ENCODE measurements at regions of chr22 and their contacts with region 1.

Region 1: DNA sequence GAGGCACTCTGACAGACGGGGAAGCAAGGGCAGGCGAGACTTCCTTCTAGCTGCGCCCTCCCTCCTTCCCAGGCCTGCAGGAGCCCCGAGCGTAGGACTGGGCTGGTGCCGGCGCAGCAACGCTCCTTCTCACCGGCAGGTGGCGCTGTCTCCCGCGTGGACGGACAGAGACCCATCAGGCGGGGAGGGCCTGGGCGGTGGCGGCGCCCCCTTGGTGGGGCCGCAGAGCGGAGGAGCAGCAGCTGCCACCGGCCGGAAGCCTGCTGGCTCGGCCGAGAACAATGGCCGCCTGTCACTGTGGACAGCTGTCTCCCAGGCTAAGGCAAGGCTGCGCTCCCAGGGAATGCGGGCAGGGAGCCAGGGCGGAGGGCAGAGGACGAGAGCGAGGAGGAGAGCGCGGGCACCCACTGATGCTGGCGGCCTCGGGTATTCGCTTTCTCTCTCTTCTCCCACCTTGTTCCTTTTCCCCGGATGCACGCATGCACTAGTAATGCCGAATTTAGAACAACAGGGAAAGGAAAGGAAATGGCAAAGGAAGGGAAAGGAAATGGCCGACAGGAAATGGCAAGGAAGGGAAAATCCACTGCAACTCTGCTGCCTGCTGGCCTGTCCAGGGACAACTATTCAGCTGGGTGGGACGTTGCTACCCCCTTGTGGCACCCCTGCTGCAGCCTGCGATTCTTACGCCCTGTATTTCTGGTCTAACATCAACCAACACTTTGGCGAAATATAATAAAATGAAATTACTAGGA is 14.4 kb downstream of the PPM1F start:
- DNase-seq: peak; percentile 90 to 96 (median 96)
- H3K4me3 ChIP-seq: peak overlapping the region in 6 of 7 experiments; percentile 16 to 66 (median 39)
- H3K27ac ChIP-seq: peak overlapping the region in 1 of 2 experiments; percentile 84
- H3K4me1 ChIP-seq: peaks cover 16 to 83% (median 80%) of the 10 kb centered on the region in 4 experiments
- H3K27me3 ChIP-seq: no peaks in the 10 kb centered on the region

Region 2: GRCh38 chr22:21778705-21779363 is 159.4 kb before region 1 on chr22:
- CTCF ChIA-PET with region 1: interaction called, 18 read pairs
- POLR2A ChIA-PET with region 1: no interaction called
- DNase-seq: no peak
- H3K4me3 ChIP-seq: no peak overlapping the region
- H3K27ac ChIP-seq: no peak overlapping the region
- H3K4me1 ChIP-seq: no peaks in the 10 kb centered on the region
- H3K27me3 ChIP-seq: no peaks in the 10 kb centered on the region

Region 3: DNA sequence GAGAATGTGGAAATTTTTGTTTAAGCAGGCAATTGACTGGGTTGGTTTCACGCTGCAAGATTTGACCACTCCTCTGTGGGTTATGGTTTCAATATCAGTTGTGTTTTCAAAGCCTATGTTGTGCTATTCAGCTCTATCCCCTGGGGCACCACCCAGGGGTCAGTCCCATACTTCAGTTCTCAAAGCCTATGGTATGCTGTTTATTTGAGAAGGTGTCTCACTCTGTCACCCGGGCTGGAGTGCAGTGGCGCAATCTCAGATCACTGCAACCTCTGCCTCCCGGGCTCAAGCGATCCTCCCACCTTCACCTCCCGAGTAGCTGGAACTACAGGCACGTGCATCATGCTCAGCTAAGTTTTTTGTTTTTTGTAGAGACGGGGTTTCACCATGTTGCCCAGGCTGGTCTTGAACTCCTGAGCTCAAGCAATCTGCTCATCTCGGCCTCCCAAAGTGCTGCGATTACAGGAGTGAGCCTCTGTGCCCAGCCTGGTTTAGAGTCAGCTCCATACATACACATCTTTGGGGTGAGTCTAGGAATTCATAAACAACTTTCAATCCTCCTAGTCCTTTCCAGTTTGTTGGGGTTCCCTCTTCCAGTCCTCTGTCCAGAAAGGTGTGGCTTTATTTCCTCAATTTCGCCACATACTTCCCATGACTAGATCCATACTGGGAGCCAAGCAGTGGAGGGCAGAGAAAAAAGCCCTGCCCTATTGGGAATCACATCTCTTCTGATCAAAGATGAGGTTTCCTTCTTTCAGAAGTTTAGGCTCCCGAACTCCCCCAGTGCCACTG is 35.8 kb before region 1 on chr22:
- CTCF ChIA-PET with region 1: no interaction called
- POLR2A ChIA-PET with region 1: no interaction called
- DNase-seq: no peak
- H3K4me3 ChIP-seq: no peak overlapping the region
- H3K27ac ChIP-seq: no peak overlapping the region
- H3K4me1 ChIP-seq: no peaks in the 10 kb centered on the region
- H3K27me3 ChIP-seq: no peaks in the 10 kb centered on the region

Region 4: GRCh38 chr22:21917181-21917958 is 20.9 kb before region 1 on chr22:
- CTCF ChIA-PET with region 1: interaction called, 10 read pairs
- POLR2A ChIA-PET with region 1: no interaction called
- DNase-seq: no peak
- H3K4me3 ChIP-seq: no peak overlapping the region
- H3K27ac ChIP-seq: no peak overlapping the region
- H3K4me1 ChIP-seq: no peaks in the 10 kb centered on the region
- H3K27me3 ChIP-seq: no peaks in the 10 kb centered on the region

Region 5: DNA sequence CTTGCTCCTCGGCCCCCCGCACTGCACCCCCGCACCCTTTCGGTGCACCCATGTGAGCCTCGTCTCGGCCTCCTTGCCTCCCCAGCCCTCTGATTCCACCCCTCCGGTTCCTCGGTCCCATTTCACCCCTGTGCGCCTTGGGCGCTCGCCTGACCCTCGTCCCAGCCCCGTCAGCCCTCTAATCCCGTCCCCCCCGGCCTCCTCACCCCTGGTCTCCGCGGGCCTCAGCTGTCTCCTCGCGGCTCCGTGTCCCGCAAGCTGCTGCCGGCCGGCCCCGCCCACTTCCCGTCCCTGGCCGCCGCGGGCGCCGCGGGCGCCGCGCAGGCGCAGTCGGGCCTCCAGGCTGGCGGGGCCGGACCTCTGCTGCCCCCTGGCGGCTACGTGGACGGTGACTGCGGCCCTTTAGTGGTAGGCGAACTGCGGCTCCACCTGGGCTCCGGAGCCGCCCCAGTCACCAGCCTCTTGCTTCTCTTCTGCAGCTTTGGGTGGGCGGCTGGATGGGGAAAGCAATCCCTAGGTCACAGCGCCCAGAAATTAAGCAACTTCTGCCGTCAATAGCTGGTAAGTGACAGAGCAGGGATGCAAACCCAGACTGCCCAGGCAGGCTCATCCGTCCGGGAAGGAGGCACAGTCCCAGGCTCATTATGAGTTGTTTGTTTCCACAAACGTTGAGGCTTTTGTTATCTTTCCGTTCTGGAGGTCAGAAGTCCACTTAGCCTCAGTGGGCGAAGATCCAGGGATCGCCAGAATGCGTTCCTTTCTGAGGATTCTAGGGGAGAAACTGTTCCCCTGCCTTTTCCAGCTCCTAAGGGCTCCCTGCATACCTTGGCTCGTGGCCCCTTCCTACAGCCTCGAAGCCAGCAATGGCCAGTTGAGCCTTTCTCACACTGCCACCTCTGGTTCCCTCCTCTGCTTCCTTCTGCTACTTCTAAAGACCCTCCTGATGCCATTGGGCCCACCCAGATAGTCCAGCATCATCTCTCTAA is 14.6 kb after region 1 on chr22 and contains the start of gene PPM1F:
- CTCF ChIA-PET with region 1: interaction called, 182 read pairs
- POLR2A ChIA-PET with region 1: interaction called, 18 read pairs
- DNase-seq: peak; percentile 66 to 85 (median 85)
- H3K4me3 ChIP-seq: peak within 1 kb of the TSS; percentile 32 to 87 (median 75)
- H3K27ac ChIP-seq: peak within 1 kb of the TSS in 1 of 2 experiments; percentile 82
- H3K4me1 ChIP-seq: peaks cover 5 to 45% (median 44%) of the 10 kb centered on the region in 4 experiments
- H3K27me3 ChIP-seq: no peaks in the 10 kb centered on the region

Region 6: GRCh38 chr22:21990445-21991303 is 52.4 kb after region 1 on chr22:
- CTCF ChIA-PET with region 1: no interaction called
- POLR2A ChIA-PET with region 1: no interaction called
- DNase-seq: no peak
- H3K4me3 ChIP-seq: no peak overlapping the region
- H3K27ac ChIP-seq: no peak overlapping the region
- H3K4me1 ChIP-seq: no peaks in the 10 kb centered on the region
- H3K27me3 ChIP-seq: peaks cover 0 to 5% (median 0%) of the 10 kb centered on the region in 5 experiments

Measured in common myeloid progenitor, CD34-positive (primary cell).